Caco-2 (cell line): ENCODE measurements at regions of chr1 and their contacts with region 1.

Region 1: DNA sequence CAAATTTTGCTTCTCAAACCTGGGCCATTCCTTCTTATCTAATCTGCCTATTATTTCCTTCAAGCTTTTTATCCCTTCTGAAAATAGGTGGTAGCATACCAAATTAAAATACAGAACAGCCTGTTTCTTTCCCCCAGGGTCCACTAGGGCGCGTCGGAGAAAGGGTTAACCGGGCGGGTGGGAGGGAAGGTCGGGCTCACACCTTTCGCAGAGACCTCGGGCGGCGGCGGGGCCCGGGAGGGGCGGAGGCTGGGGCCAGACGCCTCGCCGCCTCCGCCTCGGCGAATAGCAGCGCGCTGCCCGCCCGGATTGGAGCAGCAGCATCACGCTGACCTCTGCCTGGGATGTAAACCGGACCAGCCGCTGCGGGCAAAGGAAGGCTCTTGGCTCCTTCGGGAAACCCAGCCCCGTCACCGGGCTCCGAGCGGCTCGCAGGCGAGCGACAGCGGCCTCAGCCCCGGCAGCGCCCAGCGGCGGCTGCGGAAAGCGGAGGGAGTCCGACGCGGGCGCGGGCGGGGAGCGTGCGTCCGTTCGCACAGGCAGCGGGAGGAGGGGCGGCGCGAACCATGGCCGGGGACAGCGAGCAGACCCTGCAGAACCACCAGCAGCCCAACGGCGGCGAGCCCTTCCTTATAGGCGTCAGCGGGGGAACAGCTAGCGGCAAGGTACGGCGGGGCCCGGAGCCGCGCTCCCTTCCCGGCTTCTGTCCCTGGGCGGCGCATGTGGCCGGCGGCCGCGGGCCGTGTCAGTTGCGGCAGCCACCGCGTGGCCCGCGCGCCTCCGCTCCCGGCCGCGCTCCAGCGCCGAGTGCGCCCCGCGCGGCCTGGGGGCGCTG is at the start of gene UCK2:
- DNase-seq: peak; percentile 89 to 90
- H3K4me3 ChIP-seq: peak within 1 kb of the TSS; percentile 93
- H3K4me3 Mint-ChIP-seq: peak within 1 kb of the TSS; percentile 92
- H3K27ac Mint-ChIP-seq: peak within 1 kb of the TSS; percentile 95
- H3K4me1 ChIP-seq: peaks cover 7% of the 10 kb centered on the region; the same call in 1 of the 2 replicates
- H3K4me1 Mint-ChIP-seq: no peaks in the 10 kb centered on the region
- H3K27me3 ChIP-seq: no peaks in the 10 kb centered on the region
- H3K27me3 Mint-ChIP-seq: no peaks in the 10 kb centered on the region
- CTCF ChIP-seq: peak in 1 of 2 experiments; percentile 0
- total RNA-seq, gene UCK2: 65.0 and 67.2 TPM in 2 replicates

Region 2: GRCh38 chr1:165630629-165631341 is 196.7 kb before region 1 on chr1 and contains the start of gene MGST3:
- CTCF ChIA-PET with region 1: no interaction called
- POLR2A ChIA-PET with region 1: no interaction called
- intact Hi-C with region 1: loop called (anchors 2 kb)
- DNase-seq: peak; percentile 96 to 97
- H3K4me3 ChIP-seq: peak within 1 kb of the TSS; percentile 72
- H3K4me3 Mint-ChIP-seq: no peak within 1 kb of the TSS
- H3K27ac Mint-ChIP-seq: no peak within 1 kb of the TSS
- H3K4me1 ChIP-seq: peaks cover 17% of the 10 kb centered on the region
- H3K4me1 Mint-ChIP-seq: peaks cover 26% of the 10 kb centered on the region
- H3K27me3 ChIP-seq: no peaks in the 10 kb centered on the region
- H3K27me3 Mint-ChIP-seq: no peaks in the 10 kb centered on the region
- CTCF ChIP-seq: no peak
- total RNA-seq, gene MGST3: 173 and 193 TPM in 2 replicates

Region 3: GRCh38 chr1:165717918-165718515 is 109.5 kb before region 1 on chr1:
- CTCF ChIA-PET with region 1: no interaction called
- POLR2A ChIA-PET with region 1: no interaction called
- intact Hi-C with region 1: loop called (anchors 2 kb)
- DNase-seq: peak; percentile 57 to 65
- H3K4me3 ChIP-seq: no peak overlapping the region
- H3K4me3 Mint-ChIP-seq: no peak overlapping the region
- H3K27ac Mint-ChIP-seq: no peak overlapping the region
- H3K4me1 ChIP-seq: no peaks in the 10 kb centered on the region
- H3K4me1 Mint-ChIP-seq: no peaks in the 10 kb centered on the region
- H3K27me3 ChIP-seq: no peaks in the 10 kb centered on the region; the same call in 1 of the 2 replicates
- H3K27me3 Mint-ChIP-seq: no peaks in the 10 kb centered on the region
- CTCF ChIP-seq: peak; percentile 56 to 88

Region 4: GRCh38 chr1:165768513-165769394 is 58.7 kb before region 1 on chr1 and contains the start of gene TMCO1:
- CTCF ChIA-PET with region 1: interaction called, 5 read pairs
- POLR2A ChIA-PET with region 1: interaction called, 11 read pairs
- intact Hi-C with region 1: loop called (anchors 1 kb)
- DNase-seq: peak; percentile 95 to 98
- H3K4me3 ChIP-seq: peak within 1 kb of the TSS; percentile 73
- H3K4me3 Mint-ChIP-seq: peak within 1 kb of the TSS; percentile 94
- H3K27ac Mint-ChIP-seq: peak within 1 kb of the TSS; percentile 96
- H3K4me1 ChIP-seq: peaks cover 19% of the 10 kb centered on the region
- H3K4me1 Mint-ChIP-seq: peaks cover 37% of the 10 kb centered on the region
- H3K27me3 ChIP-seq: no peaks in the 10 kb centered on the region
- H3K27me3 Mint-ChIP-seq: no peaks in the 10 kb centered on the region
- CTCF ChIP-seq: no peak
- total RNA-seq, gene TMCO1: 138 and 152 TPM in 2 replicates

Region 5: DNA sequence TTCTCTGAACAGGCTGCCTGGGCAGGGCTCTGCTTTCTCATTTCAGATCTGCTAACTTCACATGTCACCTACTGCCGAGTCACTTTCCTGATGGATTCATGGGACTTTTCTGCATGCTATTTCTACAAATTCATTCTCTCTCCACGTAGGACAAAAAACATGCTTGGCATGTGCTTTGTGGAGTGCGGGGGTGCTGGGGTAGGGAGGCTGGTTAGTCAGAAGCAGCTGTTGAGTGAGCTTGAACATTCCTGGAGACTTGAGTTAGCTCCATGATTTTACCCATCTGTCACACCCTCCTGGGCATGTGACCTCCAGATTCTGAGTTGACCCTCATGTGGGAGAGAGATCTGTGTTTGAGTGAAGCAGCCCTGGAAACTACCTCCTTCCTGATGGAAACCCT is 71.4 kb after region 1 on chr1:
- CTCF ChIA-PET with region 1: interaction called, 4 read pairs
- POLR2A ChIA-PET with region 1: no interaction called
- intact Hi-C with region 1: loop called (anchors 2 kb)
- DNase-seq: no peak
- H3K4me3 ChIP-seq: no peak overlapping the region
- H3K4me3 Mint-ChIP-seq: no peak overlapping the region
- H3K27ac Mint-ChIP-seq: no peak overlapping the region
- H3K4me1 ChIP-seq: peaks cover 17% of the 10 kb centered on the region
- H3K4me1 Mint-ChIP-seq: peaks cover 32% of the 10 kb centered on the region
- H3K27me3 ChIP-seq: no peaks in the 10 kb centered on the region
- H3K27me3 Mint-ChIP-seq: no peaks in the 10 kb centered on the region
- CTCF ChIP-seq: no peak

Region 6: GRCh38 chr1:165914136-165914798 is 86.8 kb after region 1 on chr1:
- CTCF ChIA-PET with region 1: interaction called, 5 read pairs
- POLR2A ChIA-PET with region 1: no interaction called
- intact Hi-C with region 1: loop called (anchors 1 kb)
- DNase-seq: peak; percentile 59 to 75
- H3K4me3 ChIP-seq: no peak overlapping the region
- H3K4me3 Mint-ChIP-seq: no peak overlapping the region
- H3K27ac Mint-ChIP-seq: no peak overlapping the region
- H3K4me1 ChIP-seq: peaks cover 20% of the 10 kb centered on the region
- H3K4me1 Mint-ChIP-seq: peaks cover 16% of the 10 kb centered on the region
- H3K27me3 ChIP-seq: no peaks in the 10 kb centered on the region
- H3K27me3 Mint-ChIP-seq: no peaks in the 10 kb centered on the region
- CTCF ChIP-seq: peak; percentile 83